ENCODE measurements at regions of chr1 and their contacts with region 1.

Region 1: GRCh38 chr1:182910143-182910542 is 42.8 kb downstream of the SHCBP1L start:
- DNase-seq: no peak
- H3K4me3 Mint-ChIP-seq: no peak overlapping the region
- H3K27ac Mint-ChIP-seq: no peak overlapping the region
- H3K4me1 Mint-ChIP-seq: no peaks in the 10 kb centered on the region
- H3K27me3 Mint-ChIP-seq: peaks cover 11% of the 10 kb centered on the region
- CTCF ChIP-seq: no peak

Region 2: GRCh38 chr1:182889997-182890396 is 20.1 kb before region 1 on chr1:
- CTCF ChIA-PET with region 1: interaction called, 4 read pairs
- POLR2A ChIA-PET with region 1: interaction called, 19 read pairs
- intact Hi-C with region 1: no loop called
- DNase-seq: peak; percentile 16
- H3K4me3 Mint-ChIP-seq: no peak overlapping the region
- H3K27ac Mint-ChIP-seq: no peak overlapping the region
- H3K4me1 Mint-ChIP-seq: no peaks in the 10 kb centered on the region
- H3K27me3 Mint-ChIP-seq: no peaks in the 10 kb centered on the region
- CTCF ChIP-seq: no peak